Activated T-helper 2 cell treated with anti-CD3 and anti-CD28 coated beads, Interferon-gamma antibody, Interleukin-2, Interleukin-4, amounts not matched to agents 10 μg/mL and 5 μg/mL and 100 μg/mL, durations not matched to agents 14 hours and 24 hours and 36 hours (primary cell): ENCODE measurements at regions of chr13 and their contacts with region 1.

Region 1: DNA sequence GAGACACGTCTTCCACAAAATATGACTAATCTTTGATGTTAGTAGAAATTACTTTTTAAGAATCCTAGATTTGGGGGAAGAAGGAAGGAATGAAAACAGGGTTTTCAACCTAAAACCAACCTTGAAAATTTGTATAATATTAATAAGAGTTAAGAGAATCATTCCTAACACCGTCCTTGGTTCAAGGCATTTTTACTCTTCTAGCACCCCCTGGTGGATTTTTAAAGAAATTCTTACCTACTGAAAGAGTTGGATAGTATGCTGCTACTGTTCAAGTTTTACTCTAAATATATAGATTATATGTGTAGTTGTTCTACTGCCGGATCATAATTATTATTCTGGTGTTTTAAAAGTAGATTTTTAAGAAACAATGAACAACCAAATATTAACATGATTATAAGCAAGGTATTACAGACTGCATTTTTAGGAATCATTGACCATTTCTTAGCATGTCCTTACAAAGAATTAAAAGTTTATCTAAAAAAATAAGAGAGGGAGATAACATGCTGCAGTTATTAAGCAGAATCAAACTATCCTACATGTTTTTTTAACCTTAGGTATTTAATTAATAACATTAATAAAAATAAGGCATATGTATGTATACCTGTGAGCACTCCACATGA is 7.4 kb upstream of the SLITRK6 start:
- DNase-seq: no peak
- H3K4me3 Mint-ChIP-seq: no peak overlapping the region
- H3K27ac Mint-ChIP-seq: no peak overlapping the region
- H3K4me1 Mint-ChIP-seq: no peaks in the 10 kb centered on the region
- H3K27me3 Mint-ChIP-seq: no peaks in the 10 kb centered on the region

Region 2: GRCh38 chr13:84896128-84896527 is 910.5 kb before region 1 on chr13:
- intact Hi-C with region 1: loop called (anchors 1 kb)
- DNase-seq: no peak
- H3K4me3 Mint-ChIP-seq: no peak overlapping the region
- H3K27ac Mint-ChIP-seq: no peak overlapping the region
- H3K4me1 Mint-ChIP-seq: no peaks in the 10 kb centered on the region
- H3K27me3 Mint-ChIP-seq: no peaks in the 10 kb centered on the region

Region 3: DNA sequence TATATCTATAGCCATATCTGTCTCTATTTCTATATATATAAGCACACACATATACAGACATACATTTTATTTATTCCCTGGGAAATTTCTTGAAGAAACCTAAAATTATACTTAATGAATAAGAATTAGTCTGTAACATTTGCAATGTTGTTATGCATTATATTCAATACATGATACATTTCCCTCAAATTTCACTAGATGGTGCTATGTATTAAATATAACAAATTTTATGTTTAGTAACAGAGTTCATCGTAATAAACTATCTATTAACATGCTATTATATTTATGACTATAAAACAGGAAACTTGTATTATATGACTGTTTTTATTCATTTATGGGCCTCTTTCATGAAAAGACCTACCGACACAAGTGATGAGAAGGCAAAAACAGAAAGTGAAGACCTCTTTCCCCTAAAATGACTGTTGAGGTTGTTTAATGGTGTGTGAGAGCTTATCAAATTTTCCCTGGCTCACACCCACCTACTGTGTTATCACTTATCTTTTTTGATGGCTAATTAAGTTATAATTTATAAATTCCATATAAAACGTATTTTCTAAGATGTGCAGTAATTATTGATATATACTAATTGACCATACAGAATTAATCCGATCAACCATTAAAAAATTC is 889.3 kb before region 1 on chr13:
- intact Hi-C with region 1: loop called (anchors 5 kb)
- DNase-seq: no peak
- H3K4me3 Mint-ChIP-seq: no peak overlapping the region
- H3K27ac Mint-ChIP-seq: no peak overlapping the region
- H3K4me1 Mint-ChIP-seq: no peaks in the 10 kb centered on the region
- H3K27me3 Mint-ChIP-seq: no peaks in the 10 kb centered on the region